Mammary epithelial cell (primary cell): ENCODE measurements at regions of chr3 and their contacts with region 1.

Region 1: DNA sequence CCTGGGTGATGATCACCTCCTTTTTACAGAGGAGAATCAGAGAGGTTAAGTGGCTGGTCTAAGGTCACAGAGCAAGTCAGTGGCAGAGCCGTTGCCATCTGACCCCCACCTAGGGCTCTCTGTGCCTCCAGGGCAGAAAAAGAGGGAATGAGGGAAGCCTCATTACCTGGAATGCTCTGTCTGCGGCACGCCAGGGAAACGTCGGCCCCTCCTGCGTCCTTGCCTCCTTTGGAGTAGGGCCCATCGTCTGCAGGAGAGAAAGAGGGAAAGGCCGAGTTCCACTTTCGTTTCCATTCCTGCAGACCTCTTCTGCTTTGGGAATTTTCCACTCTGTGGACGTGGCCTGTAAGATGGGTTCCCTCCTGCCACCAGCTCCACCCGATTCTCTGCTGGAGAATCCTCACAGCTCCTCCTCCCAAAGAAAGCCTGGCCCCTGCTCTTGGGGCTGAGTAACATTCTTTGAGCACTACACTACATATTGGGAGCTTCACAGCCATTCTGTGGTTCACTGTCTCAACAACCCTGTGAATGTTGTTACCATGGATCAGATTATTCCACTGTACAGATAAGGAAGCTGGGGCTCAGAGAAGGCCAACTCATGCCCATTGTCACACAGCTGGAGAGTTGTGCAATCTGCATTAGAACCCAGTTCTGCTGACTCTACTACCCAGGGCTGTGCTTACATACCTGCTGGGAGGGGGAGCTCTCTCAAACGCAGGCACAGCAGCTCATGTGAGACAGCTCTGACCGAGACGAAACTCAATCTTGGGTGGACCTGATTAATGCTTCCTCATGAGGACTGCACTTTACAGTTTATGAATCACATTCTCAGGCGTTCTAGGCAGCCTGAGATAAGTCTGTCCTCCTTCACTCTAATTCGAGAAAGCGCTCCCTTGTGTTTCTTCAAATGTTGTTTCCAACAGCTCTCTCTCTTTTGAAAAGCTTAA is 14.2 kb downstream of the GRIP2 start:
- DNase-seq: peak; percentile 19
- H3K4me3 ChIP-seq: no peak overlapping the region
- H3K27ac ChIP-seq: no peak overlapping the region
- H3K4me1 ChIP-seq: no peaks in the 10 kb centered on the region
- H3K27me3 ChIP-seq: peaks cover 4% of the 10 kb centered on the region
- CTCF ChIP-seq: no peak

Region 2: DNA sequence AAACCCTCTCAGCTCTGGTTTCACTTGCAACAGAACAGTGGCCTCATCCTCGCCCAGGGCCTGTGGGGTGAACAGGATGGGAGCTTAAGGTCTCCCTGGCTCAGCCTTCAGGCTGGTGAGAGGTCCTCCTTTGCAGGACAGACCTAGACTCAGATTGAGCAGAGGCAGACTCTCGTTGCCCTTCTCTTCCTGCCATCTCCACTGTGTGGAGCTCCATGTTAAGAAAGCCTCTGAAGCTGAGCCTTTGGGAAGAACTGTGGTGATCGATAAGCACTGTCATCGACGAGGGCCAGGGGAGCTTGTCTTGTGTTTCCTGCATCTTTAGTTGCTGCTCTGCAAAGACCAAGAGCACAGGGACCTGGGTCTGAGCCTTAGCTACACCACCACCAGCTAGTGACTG is 51.9 kb after region 1 on chr3:
- CTCF ChIA-PET with region 1: no interaction called
- dilution Hi-C with region 1: loop called (anchors 5 kb)
- in situ Hi-C with region 1: no loop called
- intact Hi-C with region 1: no loop called
- DNase-seq: no peak
- H3K4me3 ChIP-seq: no peak overlapping the region
- H3K27ac ChIP-seq: no peak overlapping the region
- H3K4me1 ChIP-seq: no peaks in the 10 kb centered on the region
- H3K27me3 ChIP-seq: no peaks in the 10 kb centered on the region
- CTCF ChIP-seq: peak in 1 of 2 donors; percentile 8

Region 3: GRCh38 chr3:14672588-14672987 is 146.6 kb after region 1 on chr3:
- CTCF ChIA-PET with region 1: no interaction called
- dilution Hi-C with region 1: no loop called
- in situ Hi-C with region 1: no loop called
- intact Hi-C with region 1: no loop called
- DNase-seq: no peak
- H3K4me3 ChIP-seq: no peak overlapping the region
- H3K27ac ChIP-seq: no peak overlapping the region
- H3K4me1 ChIP-seq: no peaks in the 10 kb centered on the region
- H3K27me3 ChIP-seq: no peaks in the 10 kb centered on the region
- CTCF ChIP-seq: no peak